ENCODE measurements at regions of chrX and their contacts with region 1.

Region 1: GRCh38 chrX:70433848-70434351 is 10.7 kb upstream of the DLG3 start:
- DNase-seq: peak; percentile 93
- H3K4me3 ChIP-seq: peak overlapping the region; percentile 47 to 80 (median 53)
- H3K27ac ChIP-seq: peak overlapping the region in 7 of 8 donors; percentile 67 to 87 (median 76)
- H3K4me1 ChIP-seq: peaks cover 0 to 20% (median 9%) of the 10 kb centered on the region in 6 donors
- H3K27me3 ChIP-seq: peaks cover 0 to 24% (median 0%) of the 10 kb centered on the region in 7 donors
- CTCF ChIP-seq: peak; percentile 49 to 86 (median 76)
- POLR2A ChIP-seq: no peak

Region 2: GRCh38 chrX:70196961-70197805 is 236.7 kb before region 1 on chrX:
- intact Hi-C with region 1: loop called (anchors 5 kb)
- DNase-seq: no peak
- H3K4me3 ChIP-seq: no peak overlapping the region
- H3K27ac ChIP-seq: no peak overlapping the region
- H3K4me1 ChIP-seq: no peaks in the 10 kb centered on the region
- H3K27me3 ChIP-seq: peaks cover 0 to 14% (median 0%) of the 10 kb centered on the region in 7 donors
- CTCF ChIP-seq: peak; percentile 36 to 76 (median 61)
- POLR2A ChIP-seq: no peak

Measured in spleen (tissue), 13 donors.